H1 (cell line): ENCODE measurements at regions of chr4 and their contacts with region 1.

Region 1: DNA sequence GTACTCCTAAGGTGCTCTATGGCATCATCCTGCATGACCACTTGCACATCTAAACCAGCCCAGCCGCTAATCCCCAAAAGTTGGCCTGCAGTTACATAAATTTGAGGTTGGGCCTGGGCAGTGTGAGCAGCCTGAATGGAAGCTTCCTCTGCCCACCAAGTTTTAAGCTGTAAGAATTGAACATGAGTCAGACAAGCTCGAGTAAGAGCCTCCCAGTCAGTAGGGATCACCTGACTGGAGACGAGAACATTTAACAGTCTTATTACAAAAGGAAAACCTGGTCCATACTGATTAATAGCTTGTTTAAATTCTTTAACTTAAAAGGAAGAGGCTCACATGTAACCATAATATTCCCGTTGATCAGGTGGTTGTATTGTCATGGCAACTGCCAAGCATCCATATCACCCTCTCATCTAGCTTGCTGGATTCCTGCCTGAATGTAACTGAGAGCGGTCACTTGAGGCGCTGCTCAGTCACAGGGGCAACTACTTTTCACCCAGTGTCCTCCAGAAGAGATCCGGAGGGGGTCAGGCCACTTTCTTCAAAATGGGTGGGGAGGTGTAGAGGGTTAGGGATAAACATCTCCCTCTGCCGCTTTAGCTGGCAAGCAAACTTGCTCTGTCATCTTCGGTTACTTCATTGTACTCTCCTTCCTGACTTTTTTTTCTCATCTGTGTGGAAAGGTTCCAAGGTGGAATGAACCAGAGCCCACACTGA is 56.6 kb upstream of the WDR1 start:
- DNase-seq: no peak
- H3K4me3 ChIP-seq: no peak overlapping the region
- H3K27ac ChIP-seq: no peak overlapping the region
- H3K4me1 ChIP-seq: no peaks in the 10 kb centered on the region; a peak in 2 of 7 replicates
- H3K27me3 ChIP-seq: no peaks in the 10 kb centered on the region
- CTCF ChIP-seq: peak in 1 of 3 experiments; percentile 16; a peak in 1 of 4 replicates
- EP300 ChIP-seq: no peak
- POLR2A ChIP-seq: no peak
- RAD21 ChIP-seq: 0 out of 4 replicates have a peak, but pooled peaks of 1 of the 2 experiments have one; percentile 9

Region 2: DNA sequence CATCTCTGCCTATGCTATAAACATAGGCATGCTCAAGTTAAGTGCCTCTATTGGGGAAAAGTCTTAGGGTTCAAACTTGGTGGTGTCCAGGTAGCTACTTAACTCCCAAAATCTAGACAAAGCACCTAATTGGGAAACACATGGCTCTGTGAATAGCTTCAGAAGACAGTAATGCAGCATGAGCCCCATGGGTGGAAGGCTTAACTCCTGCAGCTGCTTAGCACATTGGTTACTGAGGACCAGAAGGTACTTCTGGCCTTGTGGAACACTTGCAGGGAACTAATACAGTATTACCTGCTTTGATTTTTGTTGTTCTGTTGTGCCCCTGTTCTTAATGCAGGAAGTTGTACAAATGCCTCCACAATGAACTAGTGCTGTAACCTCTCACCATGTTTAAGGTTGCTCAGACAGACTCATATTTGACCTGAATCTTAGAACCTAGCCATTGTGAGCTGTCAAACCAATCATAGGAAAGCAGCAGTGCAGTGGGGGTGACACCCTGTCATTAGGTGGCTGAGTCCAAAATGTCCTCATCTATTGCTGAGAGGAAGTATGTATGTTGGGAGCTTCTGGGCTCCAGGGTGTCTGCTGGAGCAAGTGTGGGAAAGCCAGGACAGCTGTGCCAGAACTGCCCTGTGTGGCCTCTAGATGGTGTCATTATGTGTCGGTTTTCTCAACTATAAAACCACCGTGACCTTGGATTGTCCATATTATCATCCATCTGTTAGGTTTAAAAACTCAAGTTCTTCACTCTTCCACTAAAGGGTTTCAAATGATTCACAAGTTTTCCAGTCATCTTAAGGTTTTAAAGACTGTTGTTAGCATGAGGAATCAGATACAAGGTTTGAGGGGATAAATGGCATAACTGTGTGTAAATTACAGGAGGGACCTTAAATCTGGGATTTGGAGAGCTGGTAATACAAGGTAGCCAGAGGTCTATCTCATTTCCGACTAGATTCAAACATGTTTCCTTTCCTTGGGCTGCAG is 13.3 kb after region 1 on chr4:
- CTCF ChIA-PET with region 1: interaction called, 69 read pairs
- POLR2A ChIA-PET with region 1: no interaction called
- DNase-seq: no peak
- H3K4me3 ChIP-seq: no peak overlapping the region
- H3K27ac ChIP-seq: no peak overlapping the region
- H3K4me1 ChIP-seq: no peaks in the 10 kb centered on the region
- H3K27me3 ChIP-seq: no peaks in the 10 kb centered on the region
- CTCF ChIP-seq: peak in 2 of 3 experiments; percentile 15 to 31; a peak in 2 of 4 replicates
- EP300 ChIP-seq: no peak
- POLR2A ChIP-seq: no peak
- RAD21 ChIP-seq: peak; percentile 24 to 42; a peak in 2 of 4 replicates

Region 3: GRCh38 chr4:10192331-10192730 is 19.1 kb after region 1 on chr4:
- CTCF ChIA-PET with region 1: interaction called, 69 read pairs
- POLR2A ChIA-PET with region 1: no interaction called
- DNase-seq: no peak
- H3K4me3 ChIP-seq: no peak overlapping the region
- H3K27ac ChIP-seq: no peak overlapping the region
- H3K4me1 ChIP-seq: no peaks in the 10 kb centered on the region
- H3K27me3 ChIP-seq: no peaks in the 10 kb centered on the region
- CTCF ChIP-seq: peak in 2 of 3 experiments; percentile 31 to 43; a peak in 2 of 4 replicates
- EP300 ChIP-seq: no peak
- POLR2A ChIP-seq: no peak
- RAD21 ChIP-seq: peak; percentile 54 to 68